SK-N-SH (cell line): ENCODE measurements at regions of chr16 and their contacts with region 1.

Region 1: GRCh38 chr16:22206013-22206841 is at the start of gene EEF2K:
- DNase-seq: peak; percentile 96
- H3K4me3 ChIP-seq: peak within 1 kb of the TSS; percentile 64 to 87
- H3K27ac ChIP-seq: peak within 1 kb of the TSS; percentile 69 to 82
- H3K4me1 ChIP-seq: peaks cover 6 to 7% of the 10 kb centered on the region in 2 experiments; a peak in 1 of 4 replicates
- H3K27me3 ChIP-seq: no peaks in the 10 kb centered on the region
- CTCF ChIP-seq: peak; percentile 63
- EP300 ChIP-seq: no peak; a peak in 2 of 4 replicates
- RAD21 ChIP-seq: peak; percentile 67
- polyA plus RNA-seq, gene EEF2K: 8.0 and 10.4 TPM in 2 replicates

Region 2: DNA sequence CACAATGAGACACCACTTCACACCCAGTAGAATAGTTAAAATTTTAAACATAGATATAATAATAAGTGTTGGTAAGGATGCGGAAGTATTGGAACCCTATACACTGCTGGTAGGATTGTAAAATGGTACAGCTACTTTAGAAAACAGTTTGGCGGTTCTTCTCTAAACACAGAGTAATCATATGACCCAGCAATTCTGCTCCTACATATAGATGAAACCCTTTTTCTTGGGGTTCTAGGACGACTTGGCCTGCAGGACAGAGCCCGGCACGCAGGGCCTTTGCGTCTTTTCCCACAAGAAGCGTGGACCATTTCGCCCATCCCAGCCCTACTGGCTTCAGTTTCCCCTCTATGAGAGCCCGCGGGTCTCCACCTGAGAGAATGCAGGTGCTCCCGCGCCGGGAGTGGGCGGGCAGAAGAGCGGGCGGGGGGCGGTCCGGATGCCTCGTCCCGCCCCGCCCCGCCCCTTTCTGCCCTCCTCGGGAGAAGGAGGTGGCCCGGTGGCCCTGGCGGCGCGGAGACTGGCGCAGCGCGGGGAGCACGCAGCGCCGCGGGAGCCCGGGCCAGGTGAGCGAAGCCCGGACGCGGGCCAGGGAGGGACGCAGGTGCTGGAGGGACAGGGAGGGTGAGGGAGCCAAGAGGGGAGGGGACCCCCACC is 44.1 kb before region 1 on chr16 and contains the start of gene SDR42E2:
- CTCF ChIA-PET with region 1: no interaction called
- POLR2A ChIA-PET with region 1: no interaction called
- DNase-seq: peak; percentile 83
- H3K4me3 ChIP-seq: peak within 1 kb of the TSS in 1 of 2 experiments; percentile 13; a peak in 1 of 4 replicates
- H3K27ac ChIP-seq: no peak within 1 kb of the TSS
- H3K4me1 ChIP-seq: no peaks in the 10 kb centered on the region; a peak in 1 of 4 replicates
- H3K27me3 ChIP-seq: peaks cover 10% of the 10 kb centered on the region; the same call in 1 of the 2 replicates
- CTCF ChIP-seq: no peak
- EP300 ChIP-seq: no peak
- RAD21 ChIP-seq: no peak
- polyA plus RNA-seq, gene SDR42E2: not detected in 2 replicates

Region 3: DNA sequence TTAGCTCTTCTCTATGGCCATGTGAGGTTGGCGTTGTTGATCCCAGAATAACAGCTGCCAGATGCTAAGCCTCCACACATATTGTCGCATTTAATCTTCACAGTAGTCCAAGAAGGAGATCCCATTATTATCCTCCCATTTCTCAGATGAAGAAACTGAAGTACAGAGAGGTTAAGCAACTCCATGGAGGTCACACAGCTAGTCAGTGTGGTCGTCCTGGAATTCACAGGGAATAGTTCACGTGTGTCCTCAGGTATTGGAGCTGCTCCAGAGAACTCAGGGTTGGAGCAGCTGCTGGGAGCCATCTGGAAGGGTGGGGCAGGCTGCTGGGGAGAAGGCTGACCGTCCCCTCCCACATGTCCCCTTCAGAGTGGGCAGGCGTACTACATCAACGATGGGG is 24.4 kb before region 1 on chr16:
- CTCF ChIA-PET with region 1: no interaction called
- POLR2A ChIA-PET with region 1: no interaction called
- DNase-seq: no peak
- H3K4me3 ChIP-seq: no peak overlapping the region
- H3K27ac ChIP-seq: no peak overlapping the region
- H3K4me1 ChIP-seq: no peaks in the 10 kb centered on the region
- H3K27me3 ChIP-seq: no peaks in the 10 kb centered on the region
- CTCF ChIP-seq: no peak
- EP300 ChIP-seq: no peak
- RAD21 ChIP-seq: no peak

Region 4: DNA sequence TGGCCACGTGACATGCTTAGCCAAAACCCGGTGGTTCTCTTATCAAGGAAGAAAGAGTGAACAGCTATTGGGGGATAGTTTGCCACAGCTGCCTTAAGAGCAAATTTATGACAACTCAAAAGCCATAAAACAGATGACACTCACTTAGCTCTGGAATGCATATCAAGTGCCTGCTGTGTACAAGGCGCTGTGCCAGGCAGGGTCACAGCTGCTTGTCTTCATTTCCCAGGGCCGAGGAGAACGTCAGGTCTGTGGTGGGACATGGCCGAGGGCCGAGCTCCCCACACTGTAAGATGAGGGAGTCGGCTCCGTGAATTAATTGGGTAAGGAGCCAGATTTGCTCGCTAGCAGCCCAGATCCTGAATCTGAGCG is 13.8 kb after region 1 on chr16:
- CTCF ChIA-PET with region 1: interaction called, 11 read pairs
- POLR2A ChIA-PET with region 1: no interaction called
- DNase-seq: no peak
- H3K4me3 ChIP-seq: no peak overlapping the region
- H3K27ac ChIP-seq: no peak overlapping the region; a peak in 1 of 4 replicates
- H3K4me1 ChIP-seq: peaks cover 0 to 2% of the 10 kb centered on the region in 2 experiments; a peak in 1 of 4 replicates
- H3K27me3 ChIP-seq: no peaks in the 10 kb centered on the region
- CTCF ChIP-seq: no peak
- EP300 ChIP-seq: no peak
- RAD21 ChIP-seq: no peak

Region 5: GRCh38 chr16:22297114-22297878 is 91.1 kb after region 1 on chr16 and contains the start of gene POLR3E:
- CTCF ChIA-PET with region 1: interaction called, 66 read pairs
- POLR2A ChIA-PET with region 1: interaction called, 14 read pairs
- DNase-seq: peak; percentile 96
- H3K4me3 ChIP-seq: peak within 1 kb of the TSS; percentile 78 to 84
- H3K27ac ChIP-seq: peak within 1 kb of the TSS; percentile 85 to 90
- H3K4me1 ChIP-seq: peaks cover 0 to 9% of the 10 kb centered on the region in 2 experiments; a peak in 1 of 4 replicates
- H3K27me3 ChIP-seq: no peaks in the 10 kb centered on the region
- CTCF ChIP-seq: peak; percentile 88
- EP300 ChIP-seq: peak in 1 of 2 experiments; percentile 54; a peak in 1 of 4 replicates
- RAD21 ChIP-seq: peak; percentile 87
- polyA plus RNA-seq, gene POLR3E: 57.4 and 59.6 TPM in 2 replicates